ENCODE measurements at regions of chr4 and their contacts with region 1.

Region 1: GRCh38 chr4:121726642-121727268 is 30.0 kb upstream of the ANXA5 start:
- H3K4me3 Mint-ChIP-seq: no peak overlapping the region
- H3K27ac Mint-ChIP-seq: no peak overlapping the region
- H3K4me1 Mint-ChIP-seq: no peaks in the 10 kb centered on the region
- H3K27me3 Mint-ChIP-seq: peaks cover 7% of the 10 kb centered on the region

Region 2: GRCh38 chr4:121462660-121463261 is 264.0 kb before region 1 on chr4:
- intact Hi-C with region 1: loop called (anchors 1 kb)
- H3K4me3 Mint-ChIP-seq: no peak overlapping the region
- H3K27ac Mint-ChIP-seq: no peak overlapping the region
- H3K4me1 Mint-ChIP-seq: no peaks in the 10 kb centered on the region
- H3K27me3 Mint-ChIP-seq: no peaks in the 10 kb centered on the region

Region 3: GRCh38 chr4:121484633-121485032 is 242.1 kb before region 1 on chr4:
- intact Hi-C with region 1: loop called (anchors 2 kb)
- H3K4me3 Mint-ChIP-seq: no peak overlapping the region
- H3K27ac Mint-ChIP-seq: no peak overlapping the region
- H3K4me1 Mint-ChIP-seq: peaks cover 8% of the 10 kb centered on the region
- H3K27me3 Mint-ChIP-seq: no peaks in the 10 kb centered on the region

Region 4: GRCh38 chr4:121686255-121686654 is 40.5 kb before region 1 on chr4:
- intact Hi-C with region 1: loop called (anchors 5 kb)
- H3K4me3 Mint-ChIP-seq: no peak overlapping the region
- H3K27ac Mint-ChIP-seq: no peak overlapping the region
- H3K4me1 Mint-ChIP-seq: peaks cover 21% of the 10 kb centered on the region
- H3K27me3 Mint-ChIP-seq: no peaks in the 10 kb centered on the region